ENCODE measurements at regions of chr16 and their contacts with region 1.

Region 1: DNA sequence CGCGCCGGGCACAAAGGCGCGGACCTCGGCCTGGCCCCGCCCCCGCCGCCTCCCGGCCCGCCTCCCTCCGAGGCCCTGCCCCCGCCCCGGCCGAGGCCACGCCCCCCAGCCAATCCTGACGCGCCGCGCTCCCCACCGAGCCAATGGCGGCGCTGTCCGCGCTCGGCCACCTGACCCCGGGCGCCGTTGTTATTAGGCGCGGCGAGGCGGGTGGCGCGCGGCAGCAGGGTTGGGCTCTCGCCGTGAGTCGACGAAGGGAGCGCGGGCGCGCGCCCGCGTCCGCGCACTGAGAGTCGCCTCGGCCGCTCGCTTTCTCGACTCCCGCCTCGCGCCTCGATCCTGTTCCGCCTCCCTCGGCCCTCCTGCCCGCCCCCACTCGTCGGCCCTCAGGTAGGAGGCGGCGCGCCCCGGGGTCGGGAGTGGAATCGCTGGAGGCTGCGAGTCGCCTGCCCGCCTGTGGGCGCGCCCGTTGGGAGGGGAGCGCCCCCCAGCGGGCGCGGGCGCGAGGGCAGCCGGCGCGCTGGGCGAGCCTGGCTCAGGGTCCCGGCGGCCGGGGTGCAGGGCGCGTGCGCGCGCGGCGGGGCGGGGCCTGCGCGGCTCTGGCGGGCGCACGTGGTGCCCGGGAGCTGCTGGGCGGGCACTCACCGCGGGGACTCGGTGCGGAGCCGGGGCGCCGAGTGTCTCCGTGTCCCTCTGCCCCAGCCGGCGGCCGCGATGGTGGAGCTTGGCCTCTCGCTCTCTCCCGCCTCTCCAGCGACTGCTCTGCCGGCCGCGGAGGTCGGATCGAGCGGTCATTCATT is 405 bp upstream of the CBLN1 start:
- DNase-seq: peak; percentile 92
- ATAC-seq: peak; percentile 94
- H3K4me3 Mint-ChIP-seq: peak overlapping the region; percentile 56
- H3K27ac Mint-ChIP-seq: no peak overlapping the region
- H3K4me1 Mint-ChIP-seq: peaks cover 11% of the 10 kb centered on the region
- H3K27me3 Mint-ChIP-seq: peaks cover 61% of the 10 kb centered on the region

Region 2: GRCh38 chr16:48244080-48244862 is 1037.8 kb before region 1 on chr16 and contains the start of gene LONP2:
- CTCF ChIA-PET with region 1: no interaction called
- POLR2A ChIA-PET with region 1: no interaction called
- intact Hi-C with region 1: loop called in 1 of 2 experiments (anchors 5 kb)
- DNase-seq: peak; percentile 95
- ATAC-seq: peak; percentile 94
- H3K4me3 Mint-ChIP-seq: peak within 1 kb of the TSS; percentile 91
- H3K27ac Mint-ChIP-seq: peak within 1 kb of the TSS; percentile 88
- H3K4me1 Mint-ChIP-seq: peaks cover 36% of the 10 kb centered on the region
- H3K27me3 Mint-ChIP-seq: no peaks in the 10 kb centered on the region
- total RNA-seq, gene LONP2: 60.3 to 63.2 TPM

Region 3: GRCh38 chr16:48687421-48688038 is 594.5 kb before region 1 on chr16:
- CTCF ChIA-PET with region 1: interaction called, 3 read pairs
- POLR2A ChIA-PET with region 1: no interaction called
- intact Hi-C with region 1: loop called in 1 of 2 experiments (anchors 10 kb)
- DNase-seq: peak; percentile 63
- ATAC-seq: peak; percentile 80
- H3K4me3 Mint-ChIP-seq: no peak overlapping the region
- H3K27ac Mint-ChIP-seq: no peak overlapping the region
- H3K4me1 Mint-ChIP-seq: peaks cover 2% of the 10 kb centered on the region
- H3K27me3 Mint-ChIP-seq: peaks cover 20% of the 10 kb centered on the region

Region 4: DNA sequence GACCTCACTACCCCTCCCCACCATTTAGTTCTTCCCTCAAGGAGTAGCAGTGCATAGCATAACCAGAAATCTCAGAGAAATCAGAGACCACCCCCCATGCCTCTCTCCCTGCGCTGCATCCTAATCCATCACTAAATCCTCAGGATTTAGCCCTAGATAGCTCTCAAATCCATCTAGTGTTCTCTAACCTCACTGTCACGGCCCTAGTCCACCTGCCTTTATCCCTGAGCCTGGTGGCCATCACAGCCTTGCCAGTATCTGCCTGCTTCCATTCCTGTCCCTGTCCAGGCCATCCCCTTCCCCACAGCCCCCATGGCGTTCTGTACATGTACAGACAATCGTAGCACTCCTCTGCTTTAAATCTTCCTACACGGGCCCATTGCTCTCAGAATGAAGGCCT is 19.5 kb before region 1 on chr16:
- CTCF ChIA-PET with region 1: no interaction called
- POLR2A ChIA-PET with region 1: no interaction called
- intact Hi-C with region 1: no loop called
- DNase-seq: no peak
- ATAC-seq: no peak
- H3K4me3 Mint-ChIP-seq: no peak overlapping the region
- H3K27ac Mint-ChIP-seq: no peak overlapping the region
- H3K4me1 Mint-ChIP-seq: no peaks in the 10 kb centered on the region
- H3K27me3 Mint-ChIP-seq: peaks cover 9% of the 10 kb centered on the region

Region 5: DNA sequence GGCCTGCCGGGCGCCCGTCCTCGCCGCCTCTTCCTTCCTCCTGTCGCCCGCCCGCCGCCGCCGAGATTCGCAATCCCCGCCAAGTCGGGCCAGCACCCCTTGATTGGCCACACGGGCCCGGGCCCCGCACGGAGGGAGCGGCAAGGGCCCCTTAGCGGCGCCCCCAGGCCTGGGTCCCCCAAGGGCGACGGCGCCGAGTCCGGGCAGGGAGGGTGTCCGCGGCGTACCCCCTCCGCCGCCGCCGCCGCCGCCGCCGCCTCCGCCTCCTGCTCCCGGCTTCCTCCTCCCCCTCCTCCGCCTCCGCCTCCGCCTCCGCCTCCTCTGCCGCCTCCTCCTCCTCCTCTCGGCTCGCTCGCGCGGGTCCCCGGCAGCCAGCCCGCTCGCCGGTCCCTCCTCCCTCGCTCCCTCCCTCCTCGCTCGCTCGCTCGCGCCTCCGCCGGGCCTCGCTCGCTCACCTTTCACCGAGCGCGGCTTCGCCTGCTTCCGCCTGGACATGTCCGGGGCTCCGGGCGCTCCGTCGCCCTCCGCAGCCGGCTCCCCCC is 573.3 kb after region 1 on chr16:
- CTCF ChIA-PET with region 1: no interaction called
- POLR2A ChIA-PET with region 1: no interaction called
- intact Hi-C with region 1: loop called in 1 of 2 experiments (anchors 5 kb)
- DNase-seq: peak; percentile 65
- ATAC-seq: peak; percentile 43
- H3K4me3 Mint-ChIP-seq: peak overlapping the region; percentile 32
- H3K27ac Mint-ChIP-seq: no peak overlapping the region
- H3K4me1 Mint-ChIP-seq: peaks cover 5% of the 10 kb centered on the region
- H3K27me3 Mint-ChIP-seq: peaks cover 40% of the 10 kb centered on the region

Measured in activated CD4-positive, alpha-beta T cell treated with anti-CD3 and anti-CD28 coated beads for 36 hours (primary cell).